ENCODE measurements at regions of chr2 and their contacts with region 1.

Region 1: DNA sequence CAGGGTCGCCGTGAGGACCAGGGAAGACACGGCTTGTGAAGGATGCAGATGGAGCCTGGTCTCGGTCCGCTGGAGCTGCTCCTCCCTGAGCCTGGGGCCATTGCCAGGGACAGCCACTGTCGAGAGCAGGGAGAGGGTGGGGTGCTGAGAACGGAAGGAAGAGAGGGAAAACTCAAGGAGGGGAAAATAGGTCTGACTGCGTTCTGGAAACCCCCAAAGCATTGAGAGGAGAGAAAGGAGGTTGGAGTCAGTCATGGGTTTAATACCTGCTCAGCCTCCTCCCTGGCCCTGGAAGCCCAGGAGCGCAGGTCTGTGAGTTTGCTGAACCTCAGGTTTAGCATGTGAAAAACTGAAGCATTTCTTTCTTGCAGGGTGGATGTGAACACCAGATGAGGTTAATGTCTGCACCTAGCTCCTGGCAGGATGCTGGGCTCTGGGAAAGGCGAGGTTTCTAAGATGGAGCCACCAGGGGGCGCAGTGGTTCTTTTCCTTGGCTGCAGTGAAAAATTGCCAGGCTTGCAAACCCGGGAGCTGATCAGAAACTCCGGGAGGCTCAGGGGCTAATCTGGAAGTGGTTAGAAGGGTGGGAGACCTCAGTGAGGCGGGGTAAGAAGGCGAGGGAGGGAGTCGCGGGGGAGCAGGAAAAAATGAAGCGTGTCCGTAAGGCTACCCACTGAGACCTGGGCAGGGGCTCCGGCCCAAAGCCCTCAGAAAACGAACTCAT is 33.6 kb upstream of the RNF149 start:
- DNase-seq: peak; percentile 86
- ATAC-seq: peak; percentile 66
- H3K4me3 Mint-ChIP-seq: no peak overlapping the region; the same call in 1 of the 2 replicates
- H3K27ac Mint-ChIP-seq: no peak overlapping the region
- H3K4me1 Mint-ChIP-seq: peaks cover 60% of the 10 kb centered on the region
- H3K27me3 Mint-ChIP-seq: peaks cover 18% of the 10 kb centered on the region
- CTCF ChIP-seq: peak; percentile 85

Region 2: DNA sequence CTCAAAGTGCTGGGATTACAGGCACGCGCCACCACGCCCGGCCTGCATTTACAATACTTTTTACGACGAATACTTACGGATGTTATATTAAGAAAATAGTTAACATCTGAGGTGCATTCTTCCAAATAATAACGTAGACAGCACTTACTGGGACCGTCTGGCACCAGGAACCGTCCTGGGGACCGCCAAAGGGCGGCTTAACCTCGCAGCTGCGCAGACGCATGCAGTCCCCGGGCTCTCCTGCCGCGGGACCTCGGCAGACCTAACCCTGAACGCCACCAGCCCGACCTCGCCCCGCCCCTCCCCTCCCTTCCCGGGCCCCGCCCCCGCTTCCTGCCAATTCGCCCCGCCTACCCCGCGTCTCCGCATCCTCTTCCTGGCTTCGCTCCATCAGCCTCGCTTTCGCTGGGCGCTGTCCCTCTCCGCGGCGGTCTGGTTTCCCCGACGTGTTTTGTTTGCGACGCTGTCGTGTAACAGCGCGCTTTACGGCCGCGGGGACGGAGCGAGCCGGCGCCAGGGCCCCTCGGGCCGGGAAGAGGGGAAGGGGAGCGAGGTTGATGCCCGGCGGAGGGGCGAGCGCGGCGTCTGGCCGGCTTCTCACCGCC is 89.6 kb before region 1 on chr2 and contains the start of gene CNOT11:
- CTCF ChIA-PET with region 1: interaction called, 12 read pairs
- POLR2A ChIA-PET with region 1: no interaction called
- DNase-seq: peak; percentile 99
- ATAC-seq: peak; percentile 84
- H3K4me3 Mint-ChIP-seq: peak within 1 kb of the TSS; percentile 99
- H3K27ac Mint-ChIP-seq: peak within 1 kb of the TSS; percentile 96
- H3K4me1 Mint-ChIP-seq: peaks cover 54% of the 10 kb centered on the region
- H3K27me3 Mint-ChIP-seq: no peaks in the 10 kb centered on the region
- CTCF ChIP-seq: no peak
- total RNA-seq, gene CNOT11: 47.4 to 54.0 TPM (median 48.9 TPM) in 3 replicates

Region 3: DNA sequence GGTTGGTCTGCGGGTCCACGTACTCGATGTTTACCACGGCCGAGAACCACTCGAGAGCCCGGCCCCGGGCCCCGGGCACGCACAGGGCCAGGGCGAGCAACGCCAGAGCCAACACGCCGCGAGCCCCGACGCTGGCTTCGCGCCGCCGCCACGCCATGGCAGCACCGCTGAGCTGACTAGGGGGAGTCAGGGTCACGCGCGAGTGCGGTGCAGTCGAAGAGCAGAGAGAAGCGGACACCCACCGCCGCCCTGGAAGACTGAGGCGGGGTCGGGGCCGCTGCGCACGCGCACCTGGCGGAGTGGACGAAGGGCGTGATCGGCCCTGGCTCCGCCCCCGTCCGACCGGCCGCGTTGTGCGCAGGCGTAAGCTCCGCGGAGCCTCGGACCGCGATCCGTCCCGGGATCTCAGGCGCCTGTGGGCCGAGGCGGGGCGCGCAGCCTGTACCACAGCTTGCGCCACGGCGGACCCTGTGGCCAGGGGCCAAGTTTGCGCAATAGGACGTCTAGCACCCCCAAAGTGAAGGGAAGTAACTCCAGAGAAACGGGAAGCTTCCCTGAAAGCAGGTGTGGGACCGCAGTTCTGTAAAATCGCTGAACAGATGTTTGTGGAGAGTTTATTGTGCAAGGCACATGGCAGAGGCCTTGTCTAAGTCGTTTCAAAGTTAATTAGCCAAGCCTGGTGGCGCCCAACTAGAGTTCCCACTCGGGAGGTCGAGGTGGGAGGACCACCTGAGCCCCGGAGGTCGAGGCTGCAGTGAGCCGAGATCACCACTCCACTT is 33.4 kb before region 1 on chr2 and contains the start of gene RNF149:
- CTCF ChIA-PET with region 1: interaction called, 14 read pairs
- POLR2A ChIA-PET with region 1: no interaction called
- DNase-seq: peak; percentile 89
- ATAC-seq: peak; percentile 93
- H3K4me3 Mint-ChIP-seq: peak within 1 kb of the TSS; percentile 87
- H3K27ac Mint-ChIP-seq: no peak within 1 kb of the TSS; the same call in 1 of the 2 replicates
- H3K4me1 Mint-ChIP-seq: peaks cover 50% of the 10 kb centered on the region
- H3K27me3 Mint-ChIP-seq: peaks cover 9% of the 10 kb centered on the region
- CTCF ChIP-seq: no peak
- total RNA-seq, gene RNF149: 25.6 to 30.0 TPM (median 28.4 TPM) in 3 replicates

Region 4: GRCh38 chr2:101355419-101356125 is 13.5 kb after region 1 on chr2:
- CTCF ChIA-PET with region 1: interaction called, 25 read pairs
- POLR2A ChIA-PET with region 1: no interaction called
- DNase-seq: no peak
- ATAC-seq: no peak
- H3K4me3 Mint-ChIP-seq: no peak overlapping the region
- H3K27ac Mint-ChIP-seq: no peak overlapping the region
- H3K4me1 Mint-ChIP-seq: peaks cover 26% of the 10 kb centered on the region
- H3K27me3 Mint-ChIP-seq: no peaks in the 10 kb centered on the region; the same call in 1 of the 2 replicates
- CTCF ChIP-seq: no peak

Region 5: GRCh38 chr2:101387151-101387807 is 45.2 kb after region 1 on chr2 and contains the start of gene CREG2:
- CTCF ChIA-PET with region 1: interaction called, 72 read pairs
- POLR2A ChIA-PET with region 1: no interaction called
- DNase-seq: peak; percentile 80
- ATAC-seq: peak; percentile 84
- H3K4me3 Mint-ChIP-seq: peak within 1 kb of the TSS; percentile 80
- H3K27ac Mint-ChIP-seq: no peak within 1 kb of the TSS
- H3K4me1 Mint-ChIP-seq: peaks cover 22% of the 10 kb centered on the region
- H3K27me3 Mint-ChIP-seq: peaks cover 48% of the 10 kb centered on the region
- CTCF ChIP-seq: peak; percentile 34; the same call in 1 of the 2 replicates
- total RNA-seq, gene CREG2: 1.1 to 1.7 TPM (median 1.6 TPM) in 3 replicates

Region 6: DNA sequence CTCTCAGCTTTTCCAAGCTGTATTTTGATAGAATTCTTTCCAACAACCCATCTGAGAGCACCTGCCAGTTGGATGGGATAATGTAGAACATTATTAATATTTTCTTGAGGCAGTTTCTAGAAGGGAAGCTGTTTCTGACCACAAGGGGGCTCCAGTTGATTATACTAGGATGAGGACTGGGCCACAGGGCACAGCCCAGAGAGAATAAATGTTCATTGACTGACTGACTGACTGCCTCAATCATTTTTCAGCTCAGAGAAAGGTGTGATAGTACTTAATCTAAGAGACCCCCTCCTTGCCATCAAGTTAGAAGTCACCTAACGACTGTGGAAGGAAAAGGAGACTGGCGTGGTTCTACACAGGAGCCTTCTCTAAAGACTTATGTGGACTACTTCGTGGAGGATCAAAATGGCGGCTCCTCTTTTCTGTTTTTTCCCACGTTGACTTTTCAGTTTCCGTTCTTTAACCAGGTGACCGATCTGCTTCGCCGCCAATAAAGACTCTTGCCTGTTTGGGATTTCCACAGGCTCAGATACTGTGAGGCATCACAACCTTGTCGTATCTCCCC is 77.1 kb after region 1 on chr2:
- CTCF ChIA-PET with region 1: interaction called, 13 read pairs
- POLR2A ChIA-PET with region 1: no interaction called
- DNase-seq: peak; percentile 47
- ATAC-seq: peak; percentile 66
- H3K4me3 Mint-ChIP-seq: no peak overlapping the region
- H3K27ac Mint-ChIP-seq: no peak overlapping the region
- H3K4me1 Mint-ChIP-seq: no peaks in the 10 kb centered on the region
- H3K27me3 Mint-ChIP-seq: no peaks in the 10 kb centered on the region; the same call in 1 of the 2 replicates
- CTCF ChIP-seq: peak; percentile 66

Measured in WTC11 (cell line).